ENCODE measurements at regions of chr4 and their contacts with region 1.

Region 1: DNA sequence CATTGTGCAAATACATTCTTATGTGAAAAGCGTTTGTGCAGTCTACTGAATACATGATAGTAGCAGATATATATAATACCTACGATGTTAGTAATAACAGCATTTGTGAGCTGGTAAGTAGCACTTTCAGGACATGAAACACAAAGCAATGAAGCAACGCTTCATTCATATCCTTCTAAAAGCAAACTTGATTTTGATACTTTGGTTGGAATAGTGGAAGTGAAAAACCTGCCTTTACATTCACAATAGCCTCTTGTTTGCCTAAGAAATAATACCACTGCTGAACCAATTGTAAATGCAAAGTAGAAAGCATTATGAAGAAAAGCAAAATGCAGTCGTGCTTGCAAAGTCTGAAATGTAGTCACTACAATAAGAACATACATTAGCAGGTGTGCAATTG is 926.3 kb downstream of the FSTL5 start:
- DNase-seq: no peak
- ATAC-seq: no peak
- H3K4me3 ChIP-seq: no peak overlapping the region
- H3K27ac ChIP-seq: no peak overlapping the region
- H3K4me1 ChIP-seq: no peaks in the 10 kb centered on the region
- H3K27me3 ChIP-seq: no peaks in the 10 kb centered on the region
- CTCF ChIP-seq: no peak
- POLR2A ChIP-seq: no peak
- RAD21 ChIP-seq: no peak

Region 2: DNA sequence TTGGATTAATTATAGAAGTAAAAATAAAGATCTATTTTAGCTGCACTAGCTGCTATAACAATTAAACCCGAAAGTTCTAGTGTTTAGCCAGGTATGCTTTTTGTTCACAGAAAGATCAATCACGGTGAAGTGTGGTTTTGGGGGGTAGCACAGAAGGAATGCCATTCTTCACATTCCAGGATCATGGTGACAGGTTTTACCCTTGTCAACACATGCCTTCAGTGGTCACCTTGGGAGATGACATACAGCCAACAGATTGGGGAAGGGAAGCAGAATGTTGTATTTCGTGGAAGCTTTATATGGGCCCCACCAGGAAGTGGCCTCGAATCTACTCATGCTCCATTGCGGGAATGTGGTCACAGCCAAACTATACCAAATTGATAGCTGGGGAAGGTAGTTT is 1381.0 kb before region 1 on chr4:
- CTCF ChIA-PET with region 1: no interaction called
- POLR2A ChIA-PET with region 1: no interaction called
- RAD21 ChIA-PET with region 1: no interaction called
- intact Hi-C with region 1: loop called (anchors 5 kb)
- DNase-seq: no peak
- ATAC-seq: no peak
- H3K4me3 ChIP-seq: no peak overlapping the region
- H3K27ac ChIP-seq: no peak overlapping the region
- H3K4me1 ChIP-seq: no peaks in the 10 kb centered on the region
- H3K27me3 ChIP-seq: no peaks in the 10 kb centered on the region
- CTCF ChIP-seq: no peak
- POLR2A ChIP-seq: no peak
- RAD21 ChIP-seq: no peak